ENCODE measurements at regions of chr5 and their contacts with region 1.

Region 1: DNA sequence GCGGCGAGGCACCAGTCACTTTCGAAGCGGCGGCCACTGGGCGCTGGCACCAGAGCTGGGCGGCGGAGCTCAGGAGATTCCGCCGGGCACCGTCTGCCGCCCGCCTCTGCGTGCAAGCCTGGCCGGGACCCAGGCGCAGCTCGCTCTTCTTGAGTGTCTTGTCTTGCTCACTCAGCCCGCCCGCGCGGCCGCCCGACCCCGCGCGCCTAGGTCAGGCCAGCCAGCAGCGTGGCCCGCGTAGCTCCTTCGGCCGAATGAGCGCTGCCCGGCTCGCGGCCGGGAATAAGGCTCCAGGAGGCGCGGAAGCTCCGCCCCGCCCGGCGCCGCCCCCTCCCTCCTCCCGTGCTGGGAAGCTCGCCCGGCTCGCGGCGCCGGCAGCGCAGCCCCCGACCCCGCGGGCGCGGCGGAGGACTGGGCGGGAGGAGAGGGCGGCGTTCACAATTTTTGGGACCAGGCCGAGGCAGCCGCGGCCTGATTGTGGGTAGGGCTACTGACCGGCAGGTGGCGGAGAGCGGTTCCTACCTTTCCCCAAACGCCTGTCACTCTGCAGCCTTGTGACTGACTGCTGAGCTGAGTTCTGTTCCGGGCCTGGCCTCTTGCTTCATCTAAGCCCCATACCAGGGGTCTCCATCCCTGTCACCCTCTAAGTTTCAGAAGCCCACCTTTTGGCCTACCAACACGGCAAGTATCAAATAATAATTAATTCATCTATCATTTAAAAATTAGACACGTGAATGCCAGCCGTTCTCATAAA is at the start of gene HBEGF:
- DNase-seq: peak; percentile 91
- H3K4me3 Mint-ChIP-seq: peak within 1 kb of the TSS; percentile 95
- H3K27ac Mint-ChIP-seq: peak within 1 kb of the TSS; percentile 63
- H3K4me1 Mint-ChIP-seq: peaks cover 53% of the 10 kb centered on the region
- H3K27me3 Mint-ChIP-seq: no peaks in the 10 kb centered on the region
- CTCF ChIP-seq: peak; percentile 49
- total RNA-seq, gene HBEGF: 6.4 and 7.2 TPM in 2 replicates

Region 2: GRCh38 chr5:140174465-140175366 is 171.8 kb before region 1 on chr5 and contains the start of gene CYSTM1:
- CTCF ChIA-PET with region 1: interaction called, 3 read pairs
- intact Hi-C with region 1: loop called (anchors 5 kb)
- DNase-seq: peak; percentile 99
- H3K4me3 Mint-ChIP-seq: peak within 1 kb of the TSS; percentile 88
- H3K27ac Mint-ChIP-seq: peak within 1 kb of the TSS; percentile 97
- H3K4me1 Mint-ChIP-seq: peaks cover 42% of the 10 kb centered on the region
- H3K27me3 Mint-ChIP-seq: peaks cover 16% of the 10 kb centered on the region
- CTCF ChIP-seq: no peak
- total RNA-seq, gene CYSTM1: 198 and 259 TPM in 2 replicates

Region 3: DNA sequence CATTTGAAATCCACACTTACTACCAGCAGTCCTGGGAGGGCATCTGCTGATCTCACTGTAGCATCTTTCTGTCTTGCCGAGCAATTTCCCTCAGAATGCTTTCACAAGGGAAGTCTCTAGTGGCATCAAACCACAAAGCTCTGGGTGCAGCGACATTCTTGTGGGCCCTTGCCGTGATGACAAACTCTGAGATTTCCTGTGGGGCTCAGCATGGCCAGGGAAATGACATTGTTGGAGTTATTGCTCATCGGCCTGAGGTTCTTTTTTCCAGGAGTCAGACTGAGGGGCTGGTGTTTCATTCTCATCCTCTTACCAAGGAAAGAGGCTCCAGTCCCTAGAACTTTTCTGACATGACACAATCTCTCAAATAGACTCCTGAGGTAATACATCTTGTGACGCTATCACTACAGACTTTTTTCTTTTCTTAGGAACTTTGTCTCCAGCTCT is 95.0 kb before region 1 on chr5:
- CTCF ChIA-PET with region 1: interaction called, 37 read pairs
- intact Hi-C with region 1: no loop called
- DNase-seq: peak; percentile 47
- H3K4me3 Mint-ChIP-seq: peak overlapping the region; percentile 2
- H3K27ac Mint-ChIP-seq: peak overlapping the region; percentile 51
- H3K4me1 Mint-ChIP-seq: peaks cover 26% of the 10 kb centered on the region
- H3K27me3 Mint-ChIP-seq: no peaks in the 10 kb centered on the region
- CTCF ChIP-seq: no peak

Region 4: GRCh38 chr5:140295414-140295813 is 51.1 kb before region 1 on chr5:
- CTCF ChIA-PET with region 1: interaction called, 10 read pairs
- intact Hi-C with region 1: loop called (anchors 5 kb)
- DNase-seq: peak; percentile 63
- H3K4me3 Mint-ChIP-seq: no peak overlapping the region
- H3K27ac Mint-ChIP-seq: peak overlapping the region; percentile 62
- H3K4me1 Mint-ChIP-seq: peaks cover 60% of the 10 kb centered on the region
- H3K27me3 Mint-ChIP-seq: no peaks in the 10 kb centered on the region
- CTCF ChIP-seq: no peak

Region 5: DNA sequence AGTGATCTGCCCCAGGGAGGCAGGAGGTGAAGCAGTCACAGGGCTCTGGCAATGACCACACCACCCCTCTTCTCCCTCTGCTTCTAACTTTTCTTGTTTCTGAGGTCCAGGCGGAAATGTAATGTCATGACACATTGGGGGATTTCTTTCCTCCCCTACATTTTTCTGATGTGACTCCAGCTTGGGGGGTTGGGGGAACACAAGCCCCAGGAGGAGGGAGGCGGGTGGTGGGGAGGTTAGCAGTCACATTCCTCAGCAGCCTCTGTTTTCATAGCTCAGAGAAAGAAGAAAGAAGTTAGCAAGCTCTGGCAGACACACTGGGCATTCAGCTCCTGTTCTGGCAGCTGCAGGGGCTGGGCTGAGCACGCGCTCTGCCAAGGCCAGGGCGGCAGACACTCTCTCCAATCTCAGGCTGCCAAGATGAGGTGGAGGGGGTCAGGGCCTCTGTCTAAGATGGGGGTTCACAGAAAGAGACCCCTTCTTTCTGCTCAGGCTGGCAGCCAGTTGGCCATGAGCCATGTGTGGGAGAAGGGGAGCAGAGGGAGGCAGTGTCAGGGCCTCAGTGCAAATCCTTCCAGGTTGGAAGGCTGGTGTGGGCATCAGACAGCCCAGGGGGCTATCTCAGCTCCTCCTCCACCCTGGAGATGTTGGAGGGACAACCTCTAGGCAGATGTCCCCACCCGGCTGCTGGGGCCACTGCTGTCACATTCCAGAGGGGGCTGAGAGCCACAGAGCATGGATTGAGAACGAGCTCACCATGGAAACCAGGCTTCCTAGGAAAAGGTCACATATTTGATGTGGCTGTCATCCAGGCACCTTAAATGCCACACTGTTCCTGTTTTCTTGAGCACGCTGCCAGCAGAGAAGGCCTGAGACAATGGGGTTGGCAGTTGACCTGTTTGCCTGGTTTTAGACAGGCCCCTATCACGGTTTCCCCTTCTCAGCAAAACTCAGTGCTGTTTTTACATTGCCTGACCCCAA is 23.5 kb before region 1 on chr5:
- CTCF ChIA-PET with region 1: interaction called, 18 read pairs
- intact Hi-C with region 1: no loop called
- DNase-seq: peak; percentile 63
- H3K4me3 Mint-ChIP-seq: no peak overlapping the region
- H3K27ac Mint-ChIP-seq: peak overlapping the region; percentile 55
- H3K4me1 Mint-ChIP-seq: peaks cover 39% of the 10 kb centered on the region
- H3K27me3 Mint-ChIP-seq: no peaks in the 10 kb centered on the region
- CTCF ChIP-seq: no peak